Activated CD4-positive, alpha-beta T cell treated with anti-CD3 and anti-CD28 coated beads, Interleukin-2, amount 10 ng/mL, durations not matched to agents 24 days and 14 days (primary cell): ENCODE measurements at regions of chr7 and their contacts with region 1.

Region 1: DNA sequence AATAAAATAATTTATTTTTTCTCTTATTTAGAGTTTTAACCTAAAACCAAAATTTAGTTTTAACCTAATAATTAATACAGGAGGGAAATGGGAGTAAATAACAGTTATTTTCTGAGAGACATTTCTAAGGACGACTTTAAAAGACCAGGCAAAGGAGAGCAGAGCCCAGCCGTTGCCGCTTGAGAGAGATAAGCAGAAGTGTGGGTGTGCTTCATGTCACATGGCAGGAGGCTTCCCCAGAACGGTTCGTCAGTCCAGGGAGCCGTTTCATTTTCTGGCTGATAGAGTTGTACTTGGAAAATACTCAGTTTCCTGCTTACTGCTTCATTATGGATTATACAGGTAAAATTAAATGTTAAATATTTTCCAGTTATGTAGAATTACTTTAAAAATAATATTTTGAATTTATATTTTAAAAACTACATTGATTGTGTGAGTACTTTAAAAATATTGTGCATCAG is 61.4 kb downstream of the ST7 start:
- DNase-seq: no peak
- H3K4me3 Mint-ChIP-seq: no peak overlapping the region
- H3K27ac Mint-ChIP-seq: no peak overlapping the region
- H3K4me1 Mint-ChIP-seq: peaks cover 31% of the 10 kb centered on the region
- H3K27me3 Mint-ChIP-seq: peaks cover 39% of the 10 kb centered on the region

Region 2: DNA sequence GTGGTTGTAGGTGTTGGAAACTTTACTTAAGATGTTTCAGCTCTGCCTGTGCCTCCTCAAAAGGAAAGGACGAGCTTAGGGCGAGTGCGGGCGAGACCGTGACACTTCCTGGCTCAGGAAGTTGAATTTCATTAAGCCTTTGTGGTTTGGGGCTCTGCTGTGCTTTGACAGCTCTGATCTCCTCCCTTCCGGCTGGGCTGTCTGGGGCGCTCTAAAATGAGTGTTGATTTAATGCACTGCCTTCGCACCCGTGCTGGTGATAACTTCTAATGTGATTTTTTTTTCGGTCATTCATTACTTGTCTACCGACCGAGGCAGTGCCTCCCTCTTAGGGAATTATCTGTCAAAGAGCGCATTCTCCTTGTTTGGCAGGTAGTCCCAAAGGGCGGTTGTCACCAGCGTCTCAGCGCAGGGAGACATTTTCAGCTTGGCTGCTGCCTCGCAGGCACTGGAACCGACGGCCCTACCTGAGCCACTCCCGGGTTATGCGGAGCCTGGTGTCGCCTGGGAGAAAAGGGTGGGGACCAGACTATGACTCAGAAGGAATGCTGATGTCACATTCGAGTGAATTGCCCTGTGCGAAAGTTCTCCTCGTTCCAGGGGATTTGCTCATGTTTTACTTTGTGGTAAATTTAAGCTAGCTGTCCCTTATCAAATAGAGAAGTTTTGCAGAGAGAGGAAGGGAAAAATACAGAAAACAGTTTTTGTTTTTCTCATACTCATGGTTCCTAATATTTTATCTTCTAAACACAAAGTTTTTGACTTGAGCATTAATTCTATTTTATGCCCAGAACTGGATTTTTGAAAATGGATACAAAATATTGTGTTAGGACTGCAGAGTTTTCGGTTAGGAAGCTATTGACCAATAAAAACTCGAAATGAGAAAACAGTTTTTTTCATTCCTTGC is 803.4 kb before region 1 on chr7:
- intact Hi-C with region 1: loop called (anchors 10 kb)
- DNase-seq: peak; percentile 92
- H3K4me3 Mint-ChIP-seq: peak overlapping the region; percentile 92
- H3K27ac Mint-ChIP-seq: peak overlapping the region; percentile 94
- H3K4me1 Mint-ChIP-seq: peaks cover 42% of the 10 kb centered on the region
- H3K27me3 Mint-ChIP-seq: no peaks in the 10 kb centered on the region

Region 3: DNA sequence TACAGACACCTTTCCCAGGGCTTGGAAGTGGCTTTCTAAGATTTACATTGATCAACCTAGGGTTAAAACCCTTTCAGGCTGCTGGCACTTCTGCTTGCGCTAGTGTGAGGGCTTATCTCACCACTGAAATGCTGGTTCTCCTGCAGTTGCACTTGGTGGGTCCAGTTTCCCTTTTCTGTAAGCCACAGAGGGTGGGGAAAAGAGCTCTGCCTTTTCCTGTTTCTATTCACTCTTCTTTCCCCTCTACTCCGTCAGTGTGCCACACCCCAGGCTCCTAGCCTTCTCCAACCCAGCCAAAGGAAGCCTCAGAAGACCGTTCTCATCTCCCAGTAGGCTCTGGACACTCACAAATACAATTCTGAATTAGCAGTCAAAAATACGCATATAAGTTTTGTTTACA is 171.3 kb before region 1 on chr7:
- intact Hi-C with region 1: no loop called
- DNase-seq: no peak
- H3K4me3 Mint-ChIP-seq: peak overlapping the region; percentile 17
- H3K27ac Mint-ChIP-seq: no peak overlapping the region
- H3K4me1 Mint-ChIP-seq: peaks cover 8% of the 10 kb centered on the region
- H3K27me3 Mint-ChIP-seq: peaks cover 36% of the 10 kb centered on the region

Region 4: GRCh38 chr7:116953727-116954442 is 60.8 kb before region 1 on chr7:
- intact Hi-C with region 1: loop called (anchors 2 kb)
- DNase-seq: peak; percentile 79
- H3K4me3 Mint-ChIP-seq: peak overlapping the region; percentile 91
- H3K27ac Mint-ChIP-seq: peak overlapping the region; percentile 89
- H3K4me1 Mint-ChIP-seq: peaks cover 16% of the 10 kb centered on the region
- H3K27me3 Mint-ChIP-seq: peaks cover 21% of the 10 kb centered on the region

Region 5: DNA sequence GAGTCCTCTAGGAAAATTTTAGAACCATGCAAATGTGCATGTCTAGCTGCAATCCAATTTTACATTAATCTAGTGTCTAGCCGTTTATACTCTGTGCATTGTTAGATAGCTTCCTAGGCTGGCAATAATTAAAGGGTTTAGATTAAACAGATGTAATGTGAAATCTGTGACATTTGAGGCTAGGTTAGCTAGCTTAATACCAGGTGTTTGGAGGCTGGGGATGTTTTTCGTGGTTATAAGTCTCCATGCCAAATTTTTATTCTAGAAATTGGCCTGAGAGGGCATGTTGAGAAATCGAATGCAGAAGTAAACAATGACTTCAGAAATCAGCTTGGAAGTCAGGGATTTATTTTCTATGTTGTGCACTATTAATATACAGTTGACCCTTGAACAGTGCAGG is 32.8 kb after region 1 on chr7:
- intact Hi-C with region 1: loop called (anchors 5 kb)
- DNase-seq: no peak
- H3K4me3 Mint-ChIP-seq: no peak overlapping the region
- H3K27ac Mint-ChIP-seq: no peak overlapping the region
- H3K4me1 Mint-ChIP-seq: peaks cover 19% of the 10 kb centered on the region
- H3K27me3 Mint-ChIP-seq: peaks cover 27% of the 10 kb centered on the region

Region 6: GRCh38 chr7:118080947-118081346 is 1066.2 kb after region 1 on chr7:
- intact Hi-C with region 1: loop called (anchors 2 kb)
- DNase-seq: peak; percentile 80
- H3K4me3 Mint-ChIP-seq: peak overlapping the region; percentile 35
- H3K27ac Mint-ChIP-seq: peak overlapping the region; percentile 57
- H3K4me1 Mint-ChIP-seq: peaks cover 19% of the 10 kb centered on the region
- H3K27me3 Mint-ChIP-seq: no peaks in the 10 kb centered on the region